HCT116 (cell line): ENCODE measurements at regions of chr3 and their contacts with region 1.

Region 1: GRCh38 chr3:104279617-104280016 is 1087.1 kb upstream of the ALCAM start:
- DNase-seq: no peak
- ATAC-seq: no peak
- H3K4me3 ChIP-seq: no peak overlapping the region
- H3K27ac ChIP-seq: no peak overlapping the region
- H3K4me1 ChIP-seq: no peaks in the 10 kb centered on the region
- H3K27me3 ChIP-seq: no peaks in the 10 kb centered on the region
- CTCF ChIP-seq: no peak
- POLR2A ChIP-seq: no peak
- RAD21 ChIP-seq: no peak

Region 2: GRCh38 chr3:104214937-104215336 is 64.7 kb before region 1 on chr3:
- CTCF ChIA-PET with region 1: no interaction called
- POLR2A ChIA-PET with region 1: no interaction called
- RAD21 ChIA-PET with region 1: no interaction called
- intact Hi-C with region 1: loop called (anchors 10 kb)
- DNase-seq: no peak
- ATAC-seq: no peak
- H3K4me3 ChIP-seq: no peak overlapping the region
- H3K27ac ChIP-seq: no peak overlapping the region
- H3K4me1 ChIP-seq: no peaks in the 10 kb centered on the region
- H3K27me3 ChIP-seq: no peaks in the 10 kb centered on the region
- CTCF ChIP-seq: no peak
- POLR2A ChIP-seq: no peak
- RAD21 ChIP-seq: no peak